IMR-90 (cell line): ENCODE measurements at regions of chr11 and their contacts with region 1.

Region 1: GRCh38 chr11:48063424-48063978 is 83.1 kb downstream of the PTPRJ start:
- DNase-seq: peak; percentile 99
- ATAC-seq: peak; percentile 82
- H3K4me3 ChIP-seq: no peak overlapping the region
- H3K27ac ChIP-seq: peak overlapping the region; percentile 31; the same call in 1 of the 2 replicates
- H3K4me1 ChIP-seq: peaks cover 15% of the 10 kb centered on the region
- H3K27me3 ChIP-seq: no peaks in the 10 kb centered on the region
- CTCF ChIP-seq: no peak
- POLR2A ChIP-seq: no peak
- RAD21 ChIP-seq: peak; percentile 16

Region 2: DNA sequence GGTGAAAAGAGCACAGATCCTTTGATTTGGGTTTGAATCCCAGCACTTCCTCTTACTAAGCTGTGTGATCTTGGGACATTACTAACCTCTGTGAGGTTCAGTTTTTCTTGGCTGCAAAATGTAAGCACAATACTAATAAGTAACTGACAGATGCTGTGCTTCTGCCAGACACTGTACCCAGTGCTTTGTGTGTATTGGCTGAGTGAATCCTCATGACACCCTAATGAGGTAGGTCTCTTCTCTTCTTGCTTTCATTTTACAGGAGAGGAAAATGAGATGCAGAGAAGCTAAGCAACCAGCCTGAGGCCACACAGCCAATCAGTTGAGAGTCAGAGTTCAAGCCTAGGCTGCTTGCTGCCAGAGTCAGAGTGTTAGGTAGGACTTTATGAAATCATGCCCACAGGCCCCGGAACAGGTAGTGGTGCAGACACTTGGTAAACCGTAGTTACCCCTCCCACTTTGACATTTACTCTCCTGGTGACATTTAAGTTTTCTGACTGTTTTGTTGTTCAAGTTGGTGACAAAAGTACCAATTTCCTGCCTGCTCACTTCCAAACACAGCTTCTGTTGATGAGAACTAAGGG is 62.0 kb before region 1 on chr11:
- CTCF ChIA-PET with region 1: no interaction called
- POLR2A ChIA-PET with region 1: no interaction called
- dilution Hi-C with region 1: no loop called
- in situ Hi-C with region 1: no loop called
- intact Hi-C with region 1: loop called (anchors 5 kb)
- DNase-seq: peak; percentile 94
- ATAC-seq: peak; percentile 75
- H3K4me3 ChIP-seq: no peak overlapping the region
- H3K27ac ChIP-seq: peak overlapping the region; percentile 16; the same call in 1 of the 2 replicates
- H3K4me1 ChIP-seq: peaks cover 37% of the 10 kb centered on the region
- H3K27me3 ChIP-seq: no peaks in the 10 kb centered on the region
- CTCF ChIP-seq: no peak
- POLR2A ChIP-seq: no peak
- RAD21 ChIP-seq: no peak